ENCODE measurements at regions of chr6 and their contacts with region 1.

Region 1: GRCh38 chr6:166775180-166776081 is 148.4 kb upstream of the RPS6KA2 start:
- DNase-seq: peak; percentile 36 to 90 (median 58)
- ATAC-seq: peak; percentile 88
- H3K4me3 ChIP-seq: no peak overlapping the region
- H3K4me3 Mint-ChIP-seq: no peak overlapping the region
- H3K27ac ChIP-seq: no peak overlapping the region
- H3K27ac Mint-ChIP-seq: no peak overlapping the region
- H3K4me1 ChIP-seq: peaks cover 8% of the 10 kb centered on the region
- H3K4me1 Mint-ChIP-seq: peaks cover 9% of the 10 kb centered on the region
- H3K27me3 ChIP-seq: no peaks in the 10 kb centered on the region
- H3K27me3 Mint-ChIP-seq: peaks cover 4% of the 10 kb centered on the region
- CTCF ChIP-seq: peak; percentile 88

Region 2: DNA sequence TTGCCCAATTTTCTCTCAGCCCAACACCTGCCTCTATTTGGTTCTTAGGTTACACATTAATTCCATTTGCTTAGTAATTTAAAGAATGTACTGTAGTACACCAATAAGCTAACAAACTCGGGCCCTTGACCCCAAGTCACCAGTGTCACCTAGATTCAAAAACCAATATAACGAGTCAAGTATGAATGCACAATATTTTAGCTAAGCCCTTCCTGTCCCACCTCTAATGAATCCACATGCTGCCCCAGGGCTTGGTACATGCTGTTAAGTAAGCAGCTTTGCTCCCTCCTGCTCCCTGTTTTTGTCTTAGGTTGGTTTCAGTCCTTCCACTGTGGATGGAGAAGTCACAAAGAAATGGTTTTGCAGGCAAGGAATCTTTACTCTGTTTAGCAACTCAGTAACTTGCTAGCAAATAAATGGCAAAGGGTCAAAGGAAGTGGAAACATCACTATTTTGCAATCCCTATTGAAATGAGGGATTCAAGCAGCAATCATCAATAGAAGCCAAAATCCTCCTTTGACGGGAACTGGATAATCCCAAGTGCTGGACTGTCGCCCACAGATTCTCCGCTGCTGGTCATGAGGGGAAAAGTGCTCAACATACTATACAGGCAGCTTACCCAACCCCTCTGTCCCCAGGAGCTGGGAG is 387.7 kb before region 1 on chr6:
- CTCF ChIA-PET with region 1: no interaction called
- POLR2A ChIA-PET with region 1: no interaction called
- intact Hi-C with region 1: no loop called
- DNase-seq: no peak
- ATAC-seq: no peak
- H3K4me3 ChIP-seq: no peak overlapping the region
- H3K4me3 Mint-ChIP-seq: peak overlapping the region; percentile 68
- H3K27ac ChIP-seq: no peak overlapping the region
- H3K27ac Mint-ChIP-seq: no peak overlapping the region
- H3K4me1 ChIP-seq: peaks cover 11% of the 10 kb centered on the region
- H3K4me1 Mint-ChIP-seq: peaks cover 5% of the 10 kb centered on the region
- H3K27me3 ChIP-seq: no peaks in the 10 kb centered on the region
- H3K27me3 Mint-ChIP-seq: no peaks in the 10 kb centered on the region
- CTCF ChIP-seq: no peak

Region 3: GRCh38 chr6:166757232-166758135 is 17.9 kb before region 1 on chr6:
- CTCF ChIA-PET with region 1: interaction called, 13 read pairs
- POLR2A ChIA-PET with region 1: interaction called, 7 read pairs
- intact Hi-C with region 1: no loop called
- DNase-seq: peak in 3 of 14 experiments; percentile 26 to 27 (median 27)
- ATAC-seq: peak; percentile 35
- H3K4me3 ChIP-seq: peak overlapping the region; percentile 17
- H3K4me3 Mint-ChIP-seq: peak overlapping the region; percentile 75
- H3K27ac ChIP-seq: no peak overlapping the region
- H3K27ac Mint-ChIP-seq: no peak overlapping the region
- H3K4me1 ChIP-seq: peaks cover 35% of the 10 kb centered on the region
- H3K4me1 Mint-ChIP-seq: peaks cover 49% of the 10 kb centered on the region
- H3K27me3 ChIP-seq: peaks cover 0 to 3% of the 10 kb centered on the region in 2 experiments
- H3K27me3 Mint-ChIP-seq: peaks cover 9% of the 10 kb centered on the region
- CTCF ChIP-seq: no peak

Region 4: GRCh38 chr6:167141667-167142432 is 366.4 kb after region 1 on chr6:
- CTCF ChIA-PET with region 1: interaction called, 3 read pairs
- POLR2A ChIA-PET with region 1: no interaction called
- intact Hi-C with region 1: loop called (anchors 1 kb)
- DNase-seq: peak; percentile 14 to 79 (median 54)
- ATAC-seq: peak; percentile 84
- H3K4me3 ChIP-seq: no peak overlapping the region
- H3K4me3 Mint-ChIP-seq: no peak overlapping the region
- H3K27ac ChIP-seq: no peak overlapping the region
- H3K27ac Mint-ChIP-seq: peak overlapping the region; percentile 12
- H3K4me1 ChIP-seq: peaks cover 19% of the 10 kb centered on the region
- H3K4me1 Mint-ChIP-seq: peaks cover 41% of the 10 kb centered on the region
- H3K27me3 ChIP-seq: no peaks in the 10 kb centered on the region
- H3K27me3 Mint-ChIP-seq: peaks cover 6% of the 10 kb centered on the region
- CTCF ChIP-seq: peak; percentile 90

Region 5: DNA sequence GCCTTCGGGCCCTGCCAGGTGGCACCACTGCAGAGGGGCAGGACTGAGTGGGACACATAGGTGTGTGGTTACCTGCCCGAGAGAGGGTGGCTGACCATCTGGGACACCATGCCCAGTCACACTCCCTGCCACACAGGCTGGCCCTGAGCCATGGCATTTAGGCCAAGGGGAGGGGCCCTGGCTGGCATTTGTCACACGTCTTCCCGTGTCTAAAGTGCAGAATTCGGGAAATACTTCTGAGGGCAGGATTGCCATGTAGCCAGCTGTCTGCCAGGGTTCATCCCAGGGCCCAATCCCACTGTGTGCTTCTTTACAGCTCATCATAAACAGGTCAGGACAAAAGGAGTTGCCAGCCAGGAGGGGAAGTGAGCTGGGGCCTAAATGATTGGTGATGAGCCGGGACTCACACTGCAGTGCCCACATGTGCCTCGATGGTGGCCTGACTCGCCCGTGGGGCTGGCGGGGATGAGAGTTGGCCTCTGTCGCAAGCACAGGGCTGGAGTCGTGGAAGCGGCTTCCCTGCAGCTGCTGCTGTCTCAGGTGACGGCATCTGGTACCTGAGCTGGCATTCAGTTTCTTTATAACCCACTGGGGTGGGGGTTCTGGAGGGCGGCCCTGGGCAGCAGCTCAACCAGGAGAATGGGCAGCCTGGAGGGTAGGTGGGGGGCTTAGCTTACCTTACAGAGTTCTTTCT is 509.8 kb after region 1 on chr6:
- CTCF ChIA-PET with region 1: no interaction called
- POLR2A ChIA-PET with region 1: no interaction called
- intact Hi-C with region 1: loop called (anchors 2 to 5 kb)
- DNase-seq: no peak
- ATAC-seq: no peak
- H3K4me3 ChIP-seq: no peak overlapping the region
- H3K4me3 Mint-ChIP-seq: no peak overlapping the region
- H3K27ac ChIP-seq: no peak overlapping the region
- H3K27ac Mint-ChIP-seq: no peak overlapping the region
- H3K4me1 ChIP-seq: no peaks in the 10 kb centered on the region
- H3K4me1 Mint-ChIP-seq: peaks cover 3% of the 10 kb centered on the region
- H3K27me3 ChIP-seq: no peaks in the 10 kb centered on the region
- H3K27me3 Mint-ChIP-seq: no peaks in the 10 kb centered on the region
- CTCF ChIP-seq: no peak

Region 6: DNA sequence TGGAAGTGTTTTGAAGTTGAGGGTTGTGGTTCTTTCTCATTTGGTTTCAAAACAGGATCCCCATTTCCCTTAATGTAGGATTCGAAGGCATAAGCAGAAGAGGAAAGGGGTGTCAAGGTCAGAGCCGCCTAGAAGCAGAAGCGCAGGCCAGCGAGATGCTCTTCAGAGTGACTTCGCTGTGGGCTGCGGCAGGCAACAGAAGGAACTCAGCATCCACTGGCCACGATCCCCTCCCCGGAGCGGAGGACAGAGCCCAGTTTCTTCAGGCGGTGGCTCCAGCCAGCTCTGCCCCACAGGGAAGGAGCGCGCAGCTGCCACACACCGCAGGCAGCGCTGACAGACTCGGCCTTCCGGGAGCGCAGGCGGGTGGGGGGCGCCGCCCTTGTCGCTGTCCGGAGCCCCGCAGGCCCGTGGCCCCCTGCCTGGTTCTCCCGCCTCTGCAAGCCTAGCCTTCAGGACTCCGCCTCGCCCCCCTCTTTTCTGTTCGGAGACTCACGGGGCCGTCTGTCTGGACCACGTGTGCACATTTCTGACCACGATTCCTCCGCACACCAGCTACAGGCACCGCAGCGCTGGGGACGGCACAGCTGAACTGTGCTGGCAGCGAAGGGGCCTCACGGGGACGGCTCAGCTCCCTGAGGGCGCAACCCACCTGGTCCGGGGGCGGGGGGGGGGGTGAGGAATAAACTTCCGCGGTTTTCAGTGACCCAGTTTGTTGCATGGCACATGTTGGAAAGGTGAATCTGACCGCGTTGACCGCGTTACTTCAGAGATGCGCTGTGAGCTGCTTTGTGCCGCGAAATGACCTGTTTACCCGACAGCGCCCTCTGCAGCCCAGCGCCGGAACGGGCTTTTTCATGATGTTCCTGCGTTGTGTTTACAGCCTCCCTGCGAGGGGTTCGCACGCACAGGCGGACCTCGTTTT is 575.6 kb after region 1 on chr6:
- CTCF ChIA-PET with region 1: no interaction called
- POLR2A ChIA-PET with region 1: no interaction called
- intact Hi-C with region 1: loop called in 1 of 2 experiments (anchors 10 kb)
- DNase-seq: peak; percentile 70 to 91 (median 78)
- ATAC-seq: peak; percentile 79
- H3K4me3 ChIP-seq: peak overlapping the region; percentile 67
- H3K4me3 Mint-ChIP-seq: peak overlapping the region; percentile 87
- H3K27ac ChIP-seq: no peak overlapping the region
- H3K27ac Mint-ChIP-seq: peak overlapping the region; percentile 72
- H3K4me1 ChIP-seq: peaks cover 21% of the 10 kb centered on the region
- H3K4me1 Mint-ChIP-seq: peaks cover 23% of the 10 kb centered on the region
- H3K27me3 ChIP-seq: peaks cover 0 to 3% of the 10 kb centered on the region in 2 experiments
- H3K27me3 Mint-ChIP-seq: peaks cover 5% of the 10 kb centered on the region
- CTCF ChIP-seq: peak; percentile 91

Measured in CD4-positive, alpha-beta T cell (primary cell).